ENCODE measurements at regions of chr4 and their contacts with region 1.

Region 1: DNA sequence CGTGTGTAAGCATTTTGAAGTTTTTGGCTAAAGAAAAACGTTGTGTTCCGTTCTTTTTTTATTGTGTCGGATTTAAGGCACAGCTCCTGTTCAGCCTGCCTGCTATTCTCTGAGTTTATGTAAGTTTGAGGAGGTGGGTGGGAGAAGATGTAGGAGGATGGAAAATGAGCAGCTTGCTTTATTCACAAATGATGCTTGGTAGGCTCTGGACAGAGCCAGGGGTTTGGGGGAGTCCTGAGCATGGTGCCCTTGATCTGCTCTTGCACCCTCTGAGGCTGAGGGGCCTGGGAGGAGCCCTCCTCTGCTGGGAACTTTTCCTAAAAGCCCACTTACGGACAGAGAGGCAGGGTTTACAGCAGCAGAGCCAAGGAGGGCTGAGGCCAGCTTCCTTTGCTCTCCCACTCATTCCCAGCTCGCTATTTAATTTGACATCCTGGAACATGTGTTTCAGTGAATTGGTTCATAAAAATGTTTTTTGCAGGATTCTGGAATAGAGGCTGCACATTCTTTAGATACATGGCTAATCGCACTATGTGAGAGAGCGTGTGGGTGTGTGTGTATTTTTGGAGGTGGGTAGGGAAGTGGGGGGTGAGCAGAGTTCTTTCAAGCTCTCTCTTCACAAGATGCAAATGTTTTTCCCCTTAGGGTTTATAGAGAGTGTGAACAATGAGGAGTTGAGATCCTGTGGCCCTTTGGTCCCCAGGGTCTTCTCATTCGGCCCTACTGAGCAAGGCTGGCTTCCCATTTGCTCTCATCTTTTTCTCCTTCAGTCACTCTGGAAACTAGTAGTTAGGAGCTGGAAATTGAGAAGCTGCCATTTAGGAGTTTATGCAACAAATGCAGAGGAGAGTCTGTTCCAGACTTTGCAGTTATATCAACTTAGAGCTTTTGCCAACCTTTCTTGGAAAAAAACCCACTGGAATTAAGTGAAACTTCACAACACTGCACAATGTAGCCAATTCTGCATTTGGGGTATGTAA is 32.1 kb downstream of the TMEM131L start:
- DNase-seq: no peak
- H3K4me3 Mint-ChIP-seq: no peak overlapping the region
- H3K27ac Mint-ChIP-seq: no peak overlapping the region
- H3K4me1 Mint-ChIP-seq: peaks cover 15% of the 10 kb centered on the region
- H3K27me3 Mint-ChIP-seq: no peaks in the 10 kb centered on the region
- CTCF ChIP-seq: no peak

Region 2: GRCh38 chr4:153335665-153336064 is 162.6 kb before region 1 on chr4:
- CTCF ChIA-PET with region 1: no interaction called
- POLR2A ChIA-PET with region 1: no interaction called
- intact Hi-C with region 1: no loop called
- DNase-seq: peak; percentile 40
- H3K4me3 Mint-ChIP-seq: no peak overlapping the region
- H3K27ac Mint-ChIP-seq: peak overlapping the region; percentile 36
- H3K4me1 Mint-ChIP-seq: peaks cover 14% of the 10 kb centered on the region
- H3K27me3 Mint-ChIP-seq: no peaks in the 10 kb centered on the region
- CTCF ChIP-seq: no peak

Region 3: GRCh38 chr4:153488006-153488891 is 10.0 kb before region 1 on chr4:
- CTCF ChIA-PET with region 1: interaction called, 4 read pairs
- POLR2A ChIA-PET with region 1: interaction called, 16 read pairs
- intact Hi-C with region 1: no loop called
- DNase-seq: no peak
- H3K4me3 Mint-ChIP-seq: peak overlapping the region; percentile 44
- H3K27ac Mint-ChIP-seq: peak overlapping the region; percentile 93
- H3K4me1 Mint-ChIP-seq: peaks cover 53% of the 10 kb centered on the region
- H3K27me3 Mint-ChIP-seq: no peaks in the 10 kb centered on the region
- CTCF ChIP-seq: no peak

Measured in MCF 10A (cell line).